ENCODE measurements at regions of chr1 and their contacts with region 1.

Region 1: GRCh38 chr1:209627732-209628196 is 24.5 kb downstream of the LAMB3 start:
- DNase-seq: peak; percentile 58 to 80 (median 69)
- H3K4me3 ChIP-seq: no peak overlapping the region
- H3K4me3 Mint-ChIP-seq: peak overlapping the region in 1 of 2 donors; percentile 59
- H3K27ac ChIP-seq: no peak overlapping the region
- H3K27ac Mint-ChIP-seq: peak overlapping the region in 5 of 7 donors; percentile 72 to 86 (median 84)
- H3K4me1 ChIP-seq: peaks cover 20% of the 10 kb centered on the region in 2 donors
- H3K4me1 Mint-ChIP-seq: peaks cover 27% of the 10 kb centered on the region
- H3K27me3 ChIP-seq: peaks cover 0 to 15% of the 10 kb centered on the region in 2 donors
- H3K27me3 Mint-ChIP-seq: peaks cover 18 to 40% (median 33%) of the 10 kb centered on the region in 3 donors
- CTCF ChIP-seq: peak; percentile 99

Region 2: GRCh38 chr1:209576798-209577197 is 51.0 kb before region 1 on chr1:
- intact Hi-C with region 1: loop called in 1 of 2 experiments (anchors 5 kb)
- DNase-seq: peak; percentile 45 to 74 (median 71)
- H3K4me3 ChIP-seq: no peak overlapping the region
- H3K4me3 Mint-ChIP-seq: peak overlapping the region in 1 of 2 donors; percentile 46
- H3K27ac ChIP-seq: no peak overlapping the region
- H3K27ac Mint-ChIP-seq: peak overlapping the region in 2 of 7 donors; percentile 37 to 68
- H3K4me1 ChIP-seq: no peaks in the 10 kb centered on the region
- H3K4me1 Mint-ChIP-seq: no peaks in the 10 kb centered on the region
- H3K27me3 ChIP-seq: peaks cover 8 to 16% of the 10 kb centered on the region in 2 donors
- H3K27me3 Mint-ChIP-seq: peaks cover 4 to 26% (median 8%) of the 10 kb centered on the region in 3 donors
- CTCF ChIP-seq: peak; percentile 99

Region 3: GRCh38 chr1:209884665-209885117 is 256.9 kb after region 1 on chr1:
- intact Hi-C with region 1: no loop called
- DNase-seq: peak; percentile 0 to 58 (median 15)
- H3K4me3 ChIP-seq: no peak overlapping the region
- H3K4me3 Mint-ChIP-seq: no peak overlapping the region
- H3K27ac ChIP-seq: no peak overlapping the region
- H3K27ac Mint-ChIP-seq: no peak overlapping the region
- H3K4me1 ChIP-seq: no peaks in the 10 kb centered on the region
- H3K4me1 Mint-ChIP-seq: no peaks in the 10 kb centered on the region
- H3K27me3 ChIP-seq: no peaks in the 10 kb centered on the region
- H3K27me3 Mint-ChIP-seq: peaks cover 0 to 9% (median 6%) of the 10 kb centered on the region in 3 donors
- CTCF ChIP-seq: no peak

Region 4: GRCh38 chr1:210027994-210028393 is 400.2 kb after region 1 on chr1:
- intact Hi-C with region 1: no loop called
- DNase-seq: no peak
- H3K4me3 ChIP-seq: no peak overlapping the region
- H3K4me3 Mint-ChIP-seq: no peak overlapping the region
- H3K27ac ChIP-seq: no peak overlapping the region
- H3K27ac Mint-ChIP-seq: no peak overlapping the region
- H3K4me1 ChIP-seq: no peaks in the 10 kb centered on the region
- H3K4me1 Mint-ChIP-seq: no peaks in the 10 kb centered on the region
- H3K27me3 ChIP-seq: no peaks in the 10 kb centered on the region
- H3K27me3 Mint-ChIP-seq: no peaks in the 10 kb centered on the region
- CTCF ChIP-seq: no peak